ENCODE measurements at regions of chr3 and their contacts with region 1.

Region 1: DNA sequence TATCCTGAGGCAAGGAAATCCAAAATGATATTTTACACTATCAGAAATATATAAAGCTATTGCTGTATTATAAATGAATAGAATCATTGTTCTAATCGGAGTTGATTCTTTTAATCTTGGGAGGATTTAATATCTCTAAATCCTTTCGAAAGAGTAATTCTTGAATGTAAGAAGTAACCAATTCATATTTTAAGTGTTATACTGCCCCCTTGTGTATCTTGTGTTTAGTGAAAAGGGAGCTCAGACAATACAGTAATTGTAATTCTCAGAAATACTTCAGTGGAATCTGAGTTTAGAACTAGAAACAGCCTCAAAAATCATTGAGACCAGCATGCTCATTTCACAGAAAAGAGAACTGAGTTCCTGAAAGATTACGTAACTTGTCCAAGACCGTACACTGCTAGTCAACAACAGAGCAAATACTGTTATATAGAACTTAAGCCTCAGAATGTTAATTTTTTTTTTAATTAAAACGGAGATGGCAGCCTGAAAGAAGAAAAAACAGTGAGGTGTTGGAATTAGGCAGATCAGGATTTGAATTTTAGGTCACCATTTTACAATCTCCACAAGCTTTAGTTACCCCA is 42.9 kb downstream of the PLCH1 start:
- DNase-seq: peak; percentile 54 to 80 (median 76)
- H3K4me3 ChIP-seq: no peak overlapping the region
- H3K27ac ChIP-seq: no peak overlapping the region
- H3K4me1 ChIP-seq: peaks cover 0 to 21% (median 17%) of the 10 kb centered on the region in 4 experiments
- H3K27me3 ChIP-seq: no peaks in the 10 kb centered on the region

Region 2: GRCh38 chr3:155323063-155323666 is 378.8 kb before region 1 on chr3:
- CTCF ChIA-PET with region 1: interaction called, 12 read pairs
- POLR2A ChIA-PET with region 1: no interaction called
- DNase-seq: peak; percentile 73 to 87 (median 84)
- H3K4me3 ChIP-seq: no peak overlapping the region
- H3K27ac ChIP-seq: no peak overlapping the region
- H3K4me1 ChIP-seq: peaks cover 4 to 15% (median 12%) of the 10 kb centered on the region in 4 experiments
- H3K27me3 ChIP-seq: no peaks in the 10 kb centered on the region

Region 3: DNA sequence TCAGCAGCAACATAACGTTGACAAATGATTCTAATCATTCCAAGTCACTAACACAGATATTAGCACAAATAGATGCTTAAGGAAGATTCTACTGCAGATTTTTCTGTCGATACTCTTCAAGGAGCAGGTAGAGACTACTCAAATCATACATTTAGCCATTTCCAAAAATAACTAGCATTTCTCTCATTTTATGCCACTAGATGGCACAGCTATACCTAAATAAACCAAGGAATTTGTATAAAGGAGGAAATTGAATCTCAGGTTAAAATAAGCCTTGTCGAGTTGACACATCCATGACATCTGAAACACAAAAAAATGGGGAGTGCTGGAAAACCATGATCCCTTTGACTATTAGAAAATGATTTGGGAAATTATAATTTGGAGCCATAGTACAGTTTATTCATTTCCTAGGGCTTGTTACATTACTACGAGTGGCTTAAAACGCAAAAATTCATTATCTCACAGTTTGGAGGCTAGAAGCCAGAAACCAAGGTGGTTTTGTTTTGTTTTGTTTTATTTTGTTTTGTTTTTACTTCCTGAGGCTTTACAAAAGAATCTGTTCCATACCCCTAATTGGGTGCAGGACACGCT is 349.0 kb before region 1 on chr3:
- CTCF ChIA-PET with region 1: interaction called, 109 read pairs
- POLR2A ChIA-PET with region 1: no interaction called
- DNase-seq: peak; percentile 59 to 74 (median 65)
- H3K4me3 ChIP-seq: no peak overlapping the region
- H3K27ac ChIP-seq: no peak overlapping the region
- H3K4me1 ChIP-seq: peaks cover 0 to 5% (median 1%) of the 10 kb centered on the region in 4 experiments
- H3K27me3 ChIP-seq: no peaks in the 10 kb centered on the region

Region 4: DNA sequence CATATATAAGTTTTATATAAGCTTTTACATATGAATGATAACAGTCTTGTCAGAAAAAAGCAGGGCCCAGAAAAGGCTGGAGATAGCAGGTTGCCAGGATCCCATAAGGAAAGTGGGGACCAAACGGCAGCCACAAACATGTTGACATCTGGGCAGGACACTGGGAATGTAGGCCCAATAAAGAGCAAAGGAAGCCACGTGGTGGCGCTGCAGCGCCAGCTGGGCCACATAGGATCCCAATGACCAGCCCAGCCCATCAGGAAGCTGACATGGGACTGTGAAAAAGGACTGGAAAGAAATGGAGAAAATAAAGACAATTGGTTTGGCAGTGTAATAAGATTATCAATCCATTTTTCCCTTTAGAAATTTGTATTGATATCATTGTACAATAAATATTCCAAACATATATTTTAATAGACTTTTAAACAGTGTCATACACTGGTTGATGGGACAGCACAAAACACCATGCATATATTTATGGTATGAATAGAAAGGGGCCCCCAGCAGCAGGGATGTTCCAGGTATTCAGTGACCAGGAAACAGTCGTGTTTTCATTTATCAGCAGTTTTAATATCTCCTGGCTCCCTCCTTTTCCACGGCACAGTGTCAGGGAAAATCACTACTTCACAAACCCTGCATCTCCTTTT is 319.5 kb before region 1 on chr3:
- CTCF ChIA-PET with region 1: interaction called, 16 read pairs
- POLR2A ChIA-PET with region 1: no interaction called
- DNase-seq: peak; percentile 12 to 29 (median 19)
- H3K4me3 ChIP-seq: no peak overlapping the region
- H3K27ac ChIP-seq: no peak overlapping the region
- H3K4me1 ChIP-seq: peaks cover 0 to 5% (median 1%) of the 10 kb centered on the region in 4 experiments
- H3K27me3 ChIP-seq: no peaks in the 10 kb centered on the region

Region 5: DNA sequence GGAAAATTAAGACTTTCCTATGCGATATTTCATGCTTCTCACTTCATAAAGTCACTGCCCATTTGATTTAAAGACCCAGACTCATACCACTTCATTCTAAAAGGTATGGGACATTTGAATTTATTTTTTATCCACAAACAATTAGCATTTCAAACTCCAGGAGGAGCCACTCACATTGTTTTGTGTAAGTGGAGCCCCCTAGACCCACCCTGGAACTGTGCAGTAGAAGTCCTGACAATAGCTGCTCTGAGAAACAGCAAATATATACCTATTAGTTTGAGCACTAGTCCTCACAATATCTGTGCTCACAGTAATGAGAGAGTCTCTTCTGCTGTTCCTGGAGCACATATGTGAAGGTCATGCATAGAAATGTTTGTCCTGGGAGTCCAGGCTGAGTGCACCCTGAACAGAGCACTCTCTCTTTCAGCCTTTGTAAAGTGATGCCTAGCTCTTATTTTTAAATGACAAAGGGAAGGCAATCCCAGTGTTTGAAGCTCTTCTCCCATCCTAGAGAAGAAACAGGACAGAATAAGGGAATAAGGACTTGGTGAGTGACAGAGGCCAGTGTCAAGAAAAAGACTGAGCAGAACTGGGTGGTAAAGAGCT is 281.0 kb before region 1 on chr3:
- CTCF ChIA-PET with region 1: interaction called, 15 read pairs
- POLR2A ChIA-PET with region 1: no interaction called
- DNase-seq: peak; percentile 28 to 54 (median 50)
- H3K4me3 ChIP-seq: no peak overlapping the region
- H3K27ac ChIP-seq: no peak overlapping the region
- H3K4me1 ChIP-seq: no peaks in the 10 kb centered on the region
- H3K27me3 ChIP-seq: no peaks in the 10 kb centered on the region

Region 6: DNA sequence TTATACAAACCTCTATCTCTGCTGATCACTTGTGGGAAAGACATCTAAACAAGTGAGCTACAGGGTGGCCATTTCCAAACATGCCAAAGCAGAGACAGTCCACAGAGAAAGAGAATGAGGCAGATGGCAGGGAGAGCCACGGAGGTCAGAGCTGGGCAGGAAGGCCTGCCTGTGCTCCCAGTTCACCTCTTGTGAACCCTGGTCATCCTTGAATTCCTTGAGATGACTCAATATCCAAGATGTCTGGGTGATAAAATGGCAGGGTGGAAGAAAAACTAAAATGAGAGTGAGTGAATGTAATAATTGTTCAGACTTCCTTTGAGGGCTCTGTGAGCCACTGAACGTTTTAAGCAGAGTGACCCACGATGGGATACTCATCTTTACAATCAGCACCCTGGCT is 61.9 kb before region 1 on chr3:
- CTCF ChIA-PET with region 1: no interaction called
- POLR2A ChIA-PET with region 1: no interaction called
- DNase-seq: no peak
- H3K4me3 ChIP-seq: no peak overlapping the region
- H3K27ac ChIP-seq: no peak overlapping the region
- H3K4me1 ChIP-seq: peaks cover 0 to 4% (median 0%) of the 10 kb centered on the region in 4 experiments
- H3K27me3 ChIP-seq: no peaks in the 10 kb centered on the region

Region 7: DNA sequence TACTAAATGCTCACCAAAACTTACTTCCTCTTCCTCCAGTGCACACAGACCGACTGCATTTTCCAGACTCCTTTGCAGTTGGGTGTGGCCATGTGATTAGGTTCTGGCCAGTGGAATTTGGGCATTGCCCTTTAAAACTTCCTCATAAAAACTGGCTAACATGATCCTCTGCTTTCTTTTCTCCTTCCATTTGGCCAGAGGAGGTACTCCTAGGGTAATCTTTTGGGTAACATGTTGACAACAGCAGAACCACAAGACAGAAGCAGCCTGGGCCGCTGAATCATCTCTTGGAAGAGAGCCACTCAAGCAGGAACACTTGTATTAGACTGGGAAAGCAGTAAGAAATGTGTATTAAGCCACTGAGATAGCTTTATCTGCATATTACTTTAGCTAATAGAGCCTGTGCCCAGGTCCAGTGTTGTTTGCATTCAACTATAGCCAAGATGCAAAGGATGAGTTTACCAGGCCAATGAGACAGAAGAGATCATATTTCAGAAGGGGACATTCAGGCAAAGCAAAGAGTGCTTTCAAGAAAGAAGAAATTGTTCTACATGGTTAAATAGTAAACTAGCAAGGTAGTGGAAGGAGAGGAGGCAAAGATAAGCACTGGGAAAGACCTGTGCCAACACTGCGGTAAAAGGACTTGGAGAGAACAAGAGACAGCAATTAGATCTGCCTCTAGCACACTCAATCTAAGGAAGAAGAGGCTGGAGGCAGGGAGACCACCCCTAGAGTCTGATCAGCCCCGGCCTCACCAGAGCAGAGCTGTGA is 36.9 kb before region 1 on chr3:
- CTCF ChIA-PET with region 1: no interaction called
- POLR2A ChIA-PET with region 1: no interaction called
- DNase-seq: peak; percentile 31 to 66 (median 53)
- H3K4me3 ChIP-seq: no peak overlapping the region
- H3K27ac ChIP-seq: no peak overlapping the region
- H3K4me1 ChIP-seq: peaks cover 0 to 25% (median 7%) of the 10 kb centered on the region in 4 experiments
- H3K27me3 ChIP-seq: no peaks in the 10 kb centered on the region

Measured in common myeloid progenitor, CD34-positive (primary cell).